ENCODE measurements at regions of chr3 and their contacts with region 1.

Region 1: GRCh38 chr3:138329127-138329983 is at the start of gene NME9:
- DNase-seq: peak; percentile 56
- ATAC-seq: peak; percentile 90
- H3K4me3 Mint-ChIP-seq: peak within 1 kb of the TSS; percentile 88
- H3K27ac Mint-ChIP-seq: no peak within 1 kb of the TSS
- H3K4me1 Mint-ChIP-seq: peaks cover 13% of the 10 kb centered on the region
- H3K27me3 Mint-ChIP-seq: peaks cover 25% of the 10 kb centered on the region
- CTCF ChIP-seq: no peak
- total RNA-seq, gene NME9: not detected in 2 replicates

Region 2: DNA sequence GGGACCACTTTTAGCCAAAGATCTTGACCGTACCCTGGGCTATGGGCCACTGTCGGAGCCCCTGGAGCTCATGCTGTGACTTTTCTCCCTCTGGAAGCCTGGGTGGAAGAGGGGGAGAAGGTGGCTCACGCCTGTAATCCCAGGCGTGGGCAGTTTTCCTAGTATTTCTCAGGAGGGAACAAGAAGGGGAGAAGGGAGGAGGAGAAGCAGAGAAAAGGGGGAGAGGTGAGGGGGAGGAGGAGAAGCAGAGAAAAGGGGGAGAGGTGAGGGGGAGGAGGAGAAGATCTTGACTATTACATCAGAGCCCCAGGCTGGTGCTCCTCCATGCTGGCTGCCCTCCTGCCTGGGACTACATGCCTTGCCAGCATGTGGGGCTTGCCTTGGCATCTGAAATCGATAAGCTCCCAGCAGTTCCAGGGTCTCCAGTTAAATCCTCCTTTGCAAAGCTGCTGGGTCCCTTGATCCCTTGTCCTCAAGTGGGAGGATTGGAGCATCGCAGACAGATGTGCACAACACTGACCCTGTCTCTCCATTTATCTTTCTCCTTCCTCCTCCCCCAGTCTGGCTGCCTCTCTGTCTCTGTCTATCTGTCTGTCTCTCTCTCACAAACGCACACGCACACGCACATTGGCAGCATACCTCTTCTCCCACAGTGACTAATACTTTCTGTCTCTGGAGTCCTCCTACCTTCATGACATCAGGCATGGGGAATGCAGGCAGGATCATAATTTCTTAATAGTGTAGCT is 60.7 kb after region 1 on chr3:
- CTCF ChIA-PET with region 1: no interaction called
- POLR2A ChIA-PET with region 1: no interaction called
- intact Hi-C with region 1: loop called (anchors 10 kb)
- DNase-seq: no peak
- ATAC-seq: no peak
- H3K4me3 Mint-ChIP-seq: no peak overlapping the region
- H3K27ac Mint-ChIP-seq: no peak overlapping the region
- H3K4me1 Mint-ChIP-seq: no peaks in the 10 kb centered on the region
- H3K27me3 Mint-ChIP-seq: peaks cover 31% of the 10 kb centered on the region
- CTCF ChIP-seq: no peak

Region 3: GRCh38 chr3:138761002-138761401 is 431.6 kb after region 1 on chr3:
- CTCF ChIA-PET with region 1: no interaction called
- POLR2A ChIA-PET with region 1: no interaction called
- intact Hi-C with region 1: no loop called
- DNase-seq: no peak
- ATAC-seq: no peak
- H3K4me3 Mint-ChIP-seq: no peak overlapping the region
- H3K27ac Mint-ChIP-seq: no peak overlapping the region
- H3K4me1 Mint-ChIP-seq: no peaks in the 10 kb centered on the region
- H3K27me3 Mint-ChIP-seq: no peaks in the 10 kb centered on the region
- CTCF ChIP-seq: no peak

Measured in activated B cell treated with CpG ODN at 0.5 μM for 24 hours (primary cell).